Gastrocnemius medialis (tissue), 4 donors: ENCODE measurements at regions of chr1 and their contacts with region 1.

Region 1: GRCh38 chr1:240189386-240189989 is 97.8 kb downstream of the FMN2 start:
- DNase-seq: no peak
- ATAC-seq: no peak
- H3K4me3 ChIP-seq: no peak overlapping the region
- H3K27ac ChIP-seq: no peak overlapping the region
- H3K4me1 ChIP-seq: no peaks in the 10 kb centered on the region
- H3K27me3 ChIP-seq: peaks cover 0 to 3% (median 0%) of the 10 kb centered on the region in 3 donors
- CTCF ChIP-seq: peak in 2 of 5 experiments; percentile 21 to 47
- POLR2A ChIP-seq: no peak

Region 2: GRCh38 chr1:240306673-240307072 is 117.2 kb after region 1 on chr1:
- in situ Hi-C with region 1: no loop called
- intact Hi-C with region 1: no loop called
- DNase-seq: no peak
- ATAC-seq: no peak
- H3K4me3 ChIP-seq: no peak overlapping the region
- H3K27ac ChIP-seq: no peak overlapping the region
- H3K4me1 ChIP-seq: no peaks in the 10 kb centered on the region
- H3K27me3 ChIP-seq: no peaks in the 10 kb centered on the region
- CTCF ChIP-seq: no peak
- POLR2A ChIP-seq: no peak

Region 3: DNA sequence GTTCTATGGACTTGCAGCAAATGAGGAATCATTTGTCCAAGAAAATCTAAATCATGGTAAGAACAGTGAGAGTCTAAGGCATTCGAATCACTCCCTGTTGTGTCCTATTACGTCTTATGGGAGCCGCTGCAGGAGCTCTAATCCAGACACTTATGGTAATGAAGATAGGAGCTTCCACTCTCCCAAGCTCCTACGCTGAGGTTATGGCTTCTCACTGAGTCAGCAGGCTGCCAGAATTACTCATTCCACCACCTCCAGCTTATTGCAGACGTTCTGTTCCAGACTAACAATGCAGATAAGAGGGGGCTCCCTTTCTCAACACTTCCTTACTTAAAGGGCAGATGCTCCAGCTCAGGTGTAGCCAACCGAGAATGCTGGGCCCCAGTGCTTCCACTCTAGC is 209.9 kb after region 1 on chr1:
- in situ Hi-C with region 1: no loop called
- intact Hi-C with region 1: no loop called
- DNase-seq: no peak
- ATAC-seq: no peak
- H3K4me3 ChIP-seq: no peak overlapping the region
- H3K27ac ChIP-seq: no peak overlapping the region
- H3K4me1 ChIP-seq: no peaks in the 10 kb centered on the region
- H3K27me3 ChIP-seq: no peaks in the 10 kb centered on the region
- CTCF ChIP-seq: no peak
- POLR2A ChIP-seq: no peak

Region 4: GRCh38 chr1:240691521-240692338 is 502.2 kb after region 1 on chr1:
- in situ Hi-C with region 1: loop called in 1 of 4 experiments (anchors 25 kb)
- intact Hi-C with region 1: no loop called
- DNase-seq: peak in 1 of 2 donors; percentile 44
- ATAC-seq: peak in 1 of 2 donors; percentile 64
- H3K4me3 ChIP-seq: no peak overlapping the region
- H3K27ac ChIP-seq: no peak overlapping the region
- H3K4me1 ChIP-seq: no peaks in the 10 kb centered on the region
- H3K27me3 ChIP-seq: no peaks in the 10 kb centered on the region
- CTCF ChIP-seq: peak in 3 of 5 experiments; percentile 8 to 35 (median 19)
- POLR2A ChIP-seq: no peak